HEK293T (cell line): ENCODE measurements at regions of chr19 and their contacts with region 1.

Region 1: GRCh38 chr19:17996826-17997316 is 11.1 kb upstream of the ARRDC2 start:
- DNase-seq: peak; percentile 90

Region 2: DNA sequence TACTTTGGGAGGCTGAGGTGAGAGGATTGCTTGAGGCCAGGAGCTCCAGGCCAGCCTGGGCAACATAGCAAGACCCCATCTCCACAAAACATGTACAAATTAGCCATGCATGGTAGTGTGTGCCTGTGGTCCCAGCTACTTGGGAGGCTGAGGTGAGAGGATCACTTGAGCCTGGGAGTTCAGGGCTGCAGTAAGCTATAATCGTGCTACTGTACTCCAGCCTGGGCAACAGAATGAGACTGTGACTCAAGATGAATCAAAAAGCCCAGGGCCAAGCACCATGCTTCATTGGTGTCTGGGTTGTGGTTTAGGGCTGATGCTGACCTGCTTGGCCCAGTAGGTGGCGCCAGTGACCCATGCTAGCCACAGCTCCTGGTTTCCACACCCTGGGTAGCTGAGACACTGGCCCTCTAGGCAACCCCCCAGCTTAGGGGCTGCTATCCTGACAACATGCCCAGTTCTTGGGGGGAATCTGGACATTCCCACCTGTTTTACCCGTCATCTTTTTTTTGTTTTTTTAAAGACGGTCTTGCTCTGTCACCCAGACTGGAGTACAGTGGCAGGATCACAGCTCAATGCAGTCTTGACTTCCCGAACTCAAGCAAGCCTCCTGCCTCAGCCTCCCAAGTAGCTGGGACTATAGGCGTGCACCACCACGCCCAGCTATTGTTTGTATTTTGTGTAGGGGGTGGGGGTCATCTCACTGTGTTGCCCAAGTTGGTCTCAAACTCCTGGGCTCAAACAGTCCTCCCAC is 58.6 kb before region 1 on chr19:
- CTCF ChIA-PET with region 1: interaction called, 44 read pairs
- POLR2A ChIA-PET with region 1: interaction called, 4 read pairs
- DNase-seq: peak; percentile 84

Region 3: GRCh38 chr19:17977021-17977420 is 19.9 kb before region 1 on chr19:
- CTCF ChIA-PET with region 1: interaction called, 10 read pairs
- POLR2A ChIA-PET with region 1: no interaction called
- DNase-seq: no peak

Region 4: GRCh38 chr19:18074190-18074589 is 77.3 kb after region 1 on chr19:
- CTCF ChIA-PET with region 1: no interaction called
- POLR2A ChIA-PET with region 1: no interaction called
- DNase-seq: no peak